HepG2 (cell line): ENCODE measurements at regions of chr13 and their contacts with region 1.

Region 1: DNA sequence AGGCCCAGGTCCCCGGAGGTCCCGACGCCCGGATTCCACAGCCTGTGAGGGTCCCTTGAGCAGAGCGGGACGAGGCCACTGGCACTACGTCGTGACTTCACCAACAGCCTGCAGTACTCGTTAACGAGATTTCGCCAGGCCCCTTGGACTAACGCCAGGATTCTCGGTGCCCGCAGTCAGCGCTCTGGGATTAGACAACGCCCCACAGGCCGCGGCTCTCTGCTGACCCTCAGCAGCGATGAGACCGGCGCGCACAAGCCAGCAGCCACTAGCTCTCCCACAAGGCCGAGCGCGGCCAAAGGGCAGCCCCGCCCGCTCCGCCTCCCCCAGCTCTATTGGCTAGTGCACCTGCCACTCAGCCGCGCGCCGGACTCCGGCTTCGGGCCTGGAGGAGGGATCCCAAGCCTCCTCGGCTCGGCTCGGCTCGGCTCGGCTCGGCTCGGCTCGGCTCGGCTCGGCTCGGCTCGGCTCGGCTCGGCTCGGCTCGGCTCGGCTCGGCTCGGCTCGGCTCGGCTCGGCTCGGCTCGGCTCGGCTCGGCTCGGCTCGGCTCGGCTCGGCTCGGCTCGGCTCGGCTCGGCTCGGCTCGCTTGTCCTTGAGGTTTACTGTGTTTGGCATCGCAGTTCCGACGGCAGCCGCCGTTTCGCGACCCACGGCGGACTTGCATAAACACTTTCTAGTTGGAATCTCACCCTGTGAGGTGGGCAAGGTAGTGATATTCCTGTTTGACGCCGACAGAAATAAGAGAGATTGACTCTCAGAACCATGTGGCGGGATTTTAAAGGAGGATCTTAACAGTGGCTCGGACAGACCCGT is 231.7 kb upstream of the SERP2 start:
- DNase-seq: peak; percentile 89
- ATAC-seq: peak; percentile 100
- H3K4me3 ChIP-seq: peak overlapping the region; percentile 40 to 73 (median 57)
- H3K27ac ChIP-seq: peak overlapping the region; percentile 82
- H3K4me1 ChIP-seq: peaks cover 26% of the 10 kb centered on the region
- H3K27me3 ChIP-seq: no peaks in the 10 kb centered on the region
- CTCF ChIP-seq: peak; percentile 25; the same call in 1 of the 2 replicates
- EP300 ChIP-seq: no peak
- POLR2A ChIP-seq: peak; percentile 75 to 92
- RAD21 ChIP-seq: peak; percentile 57; the same call in 1 of the 2 replicates

Region 2: GRCh38 chr13:44050450-44051063 is 91.4 kb before region 1 on chr13:
- CTCF ChIA-PET with region 1: no interaction called
- POLR2A ChIA-PET with region 1: no interaction called
- in situ Hi-C with region 1: no loop called
- intact Hi-C with region 1: loop called (anchors 5 kb)
- DNase-seq: peak; percentile 7
- ATAC-seq: no peak
- H3K4me3 ChIP-seq: no peak overlapping the region
- H3K27ac ChIP-seq: no peak overlapping the region
- H3K4me1 ChIP-seq: no peaks in the 10 kb centered on the region
- H3K27me3 ChIP-seq: no peaks in the 10 kb centered on the region
- CTCF ChIP-seq: peak; percentile 41
- EP300 ChIP-seq: no peak
- POLR2A ChIP-seq: no peak
- RAD21 ChIP-seq: no peak